ENCODE measurements at regions of chr4 and their contacts with region 1.

Region 1: DNA sequence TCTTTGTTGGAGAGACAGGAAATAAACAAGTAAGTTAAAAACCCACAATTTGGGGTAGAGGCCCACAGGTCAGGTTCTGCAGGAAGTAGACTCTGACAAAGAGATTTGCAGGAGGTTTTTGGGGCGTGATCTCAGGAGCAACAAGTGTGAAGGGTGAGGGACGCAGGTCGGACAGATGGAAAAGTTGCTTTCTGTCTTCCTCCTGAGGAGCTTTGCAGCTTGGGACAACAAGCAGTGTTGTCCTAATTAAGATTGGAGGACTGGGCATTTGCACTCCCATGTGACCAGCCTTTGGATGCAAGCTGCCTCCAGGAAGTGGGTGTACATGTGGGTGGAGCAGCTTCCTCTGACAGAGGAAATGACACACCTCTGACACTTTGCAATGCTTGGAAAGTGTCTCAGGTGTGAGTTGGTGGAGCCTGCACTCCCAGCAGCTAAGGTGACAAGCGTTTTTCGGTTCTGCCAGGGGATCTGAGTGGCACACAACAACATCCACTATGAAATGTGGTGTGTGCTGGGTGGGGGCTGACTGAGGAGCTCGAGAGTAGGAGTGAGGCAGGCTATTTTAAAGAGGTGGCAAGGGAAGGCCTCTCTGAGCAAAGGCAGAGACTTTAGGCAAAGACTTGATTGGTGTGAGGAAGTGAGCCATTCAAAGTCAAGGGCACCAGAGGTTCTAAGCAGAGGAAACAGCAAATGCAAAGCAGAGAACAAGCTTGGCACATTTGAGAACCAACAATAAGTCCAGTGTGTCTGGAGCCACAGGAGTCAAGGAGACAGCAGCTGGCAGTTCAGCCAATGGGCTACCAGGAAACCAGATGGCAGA is 339.8 kb upstream of the GATB start:
- DNase-seq: peak; percentile 61 to 93 (median 82)
- ATAC-seq: peak; percentile 82
- H3K4me3 ChIP-seq: peak overlapping the region; percentile 9 to 61
- H3K4me3 Mint-ChIP-seq: peak overlapping the region; percentile 85
- H3K27ac ChIP-seq: peak overlapping the region; percentile 80 to 90
- H3K27ac Mint-ChIP-seq: peak overlapping the region; percentile 99
- H3K4me1 ChIP-seq: peaks cover 96% of the 10 kb centered on the region
- H3K4me1 Mint-ChIP-seq: peaks cover 91% of the 10 kb centered on the region
- H3K27me3 ChIP-seq: no peaks in the 10 kb centered on the region
- H3K27me3 Mint-ChIP-seq: no peaks in the 10 kb centered on the region
- CTCF ChIP-seq: no peak

Region 2: DNA sequence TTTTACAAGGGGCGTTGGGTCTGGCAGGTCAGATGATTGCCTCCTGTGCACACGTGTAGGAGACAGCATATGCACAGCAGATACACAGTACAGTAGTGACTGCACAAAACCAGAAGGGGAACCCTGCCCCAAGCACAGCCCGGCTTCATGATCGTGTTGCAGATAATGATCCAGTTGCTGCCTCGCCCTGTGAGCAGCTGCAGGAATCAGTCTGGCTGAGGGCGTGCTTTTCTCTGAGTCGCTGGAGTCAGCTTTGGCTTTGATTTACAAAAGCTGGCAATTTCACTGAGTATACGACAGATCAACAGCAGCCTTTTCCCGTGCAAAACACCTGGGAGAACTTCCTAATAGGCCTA is 36.7 kb before region 1 on chr4:
- CTCF ChIA-PET with region 1: interaction called, 6 read pairs
- POLR2A ChIA-PET with region 1: interaction called, 8 read pairs
- intact Hi-C with region 1: loop called in 1 of 2 experiments (anchors 5 kb)
- DNase-seq: peak; percentile 17 to 75 (median 46)
- ATAC-seq: peak; percentile 98
- H3K4me3 ChIP-seq: no peak overlapping the region
- H3K4me3 Mint-ChIP-seq: no peak overlapping the region
- H3K27ac ChIP-seq: no peak overlapping the region
- H3K27ac Mint-ChIP-seq: no peak overlapping the region
- H3K4me1 ChIP-seq: peaks cover 4% of the 10 kb centered on the region
- H3K4me1 Mint-ChIP-seq: peaks cover 38% of the 10 kb centered on the region
- H3K27me3 ChIP-seq: no peaks in the 10 kb centered on the region
- H3K27me3 Mint-ChIP-seq: no peaks in the 10 kb centered on the region
- CTCF ChIP-seq: peak; percentile 23

Region 3: DNA sequence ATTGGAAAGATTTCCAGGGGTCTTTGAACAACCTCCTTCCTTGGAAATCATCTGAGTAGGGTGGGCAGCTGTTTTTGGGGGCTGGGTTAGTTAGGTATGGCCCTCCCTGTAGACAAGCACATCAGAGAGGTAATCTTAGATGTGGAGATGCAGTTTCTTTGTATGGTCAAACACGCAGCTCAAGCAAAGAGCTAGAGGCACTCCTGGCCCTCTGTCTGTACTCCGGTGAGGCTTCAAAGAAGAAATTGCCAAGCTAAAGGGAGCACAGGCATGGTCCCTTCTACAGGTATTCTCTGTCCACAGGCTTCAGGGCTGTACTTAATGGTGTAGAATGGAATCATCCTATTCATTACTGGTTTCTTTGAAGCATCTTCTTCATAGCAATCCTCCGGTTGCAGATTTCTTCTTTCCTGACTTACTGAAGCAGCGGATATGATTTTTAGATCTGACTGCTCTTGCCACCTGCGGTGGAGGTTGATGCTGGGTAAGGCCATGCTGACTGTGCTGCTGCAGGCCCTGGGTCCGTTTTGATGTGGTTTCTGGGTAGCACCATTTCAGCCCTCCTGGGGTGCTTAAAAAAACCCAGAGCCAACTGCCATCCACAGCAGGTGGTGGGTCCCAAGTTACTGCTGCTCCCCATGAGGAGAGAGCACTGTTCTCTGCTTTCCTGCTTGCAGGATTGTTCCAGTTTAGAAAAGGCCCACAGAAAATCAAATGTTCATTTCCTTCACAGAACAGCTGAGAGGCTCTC is 20.9 kb before region 1 on chr4:
- CTCF ChIA-PET with region 1: interaction called, 5 read pairs
- POLR2A ChIA-PET with region 1: interaction called, 14 read pairs
- intact Hi-C with region 1: loop called in 1 of 2 experiments (anchors 2 kb)
- DNase-seq: peak in 8 of 9 experiments; percentile 22 to 80 (median 53)
- ATAC-seq: peak; percentile 82
- H3K4me3 ChIP-seq: no peak overlapping the region
- H3K4me3 Mint-ChIP-seq: peak overlapping the region; percentile 26
- H3K27ac ChIP-seq: peak overlapping the region in 1 of 2 experiments; percentile 43
- H3K27ac Mint-ChIP-seq: peak overlapping the region; percentile 92
- H3K4me1 ChIP-seq: peaks cover 41% of the 10 kb centered on the region
- H3K4me1 Mint-ChIP-seq: peaks cover 79% of the 10 kb centered on the region
- H3K27me3 ChIP-seq: no peaks in the 10 kb centered on the region
- H3K27me3 Mint-ChIP-seq: no peaks in the 10 kb centered on the region
- CTCF ChIP-seq: no peak

Region 4: GRCh38 chr4:152112887-152113286 is 12.3 kb after region 1 on chr4:
- CTCF ChIA-PET with region 1: interaction called, 13 read pairs
- POLR2A ChIA-PET with region 1: interaction called, 21 read pairs
- intact Hi-C with region 1: loop called in 1 of 2 experiments (anchors 1 kb)
- DNase-seq: peak in 2 of 9 experiments; percentile 26 to 49
- ATAC-seq: no peak
- H3K4me3 ChIP-seq: no peak overlapping the region
- H3K4me3 Mint-ChIP-seq: no peak overlapping the region
- H3K27ac ChIP-seq: peak overlapping the region in 1 of 2 experiments; percentile 34
- H3K27ac Mint-ChIP-seq: peak overlapping the region; percentile 97
- H3K4me1 ChIP-seq: peaks cover 81% of the 10 kb centered on the region
- H3K4me1 Mint-ChIP-seq: peaks cover 92% of the 10 kb centered on the region
- H3K27me3 ChIP-seq: no peaks in the 10 kb centered on the region
- H3K27me3 Mint-ChIP-seq: no peaks in the 10 kb centered on the region
- CTCF ChIP-seq: no peak

Region 5: DNA sequence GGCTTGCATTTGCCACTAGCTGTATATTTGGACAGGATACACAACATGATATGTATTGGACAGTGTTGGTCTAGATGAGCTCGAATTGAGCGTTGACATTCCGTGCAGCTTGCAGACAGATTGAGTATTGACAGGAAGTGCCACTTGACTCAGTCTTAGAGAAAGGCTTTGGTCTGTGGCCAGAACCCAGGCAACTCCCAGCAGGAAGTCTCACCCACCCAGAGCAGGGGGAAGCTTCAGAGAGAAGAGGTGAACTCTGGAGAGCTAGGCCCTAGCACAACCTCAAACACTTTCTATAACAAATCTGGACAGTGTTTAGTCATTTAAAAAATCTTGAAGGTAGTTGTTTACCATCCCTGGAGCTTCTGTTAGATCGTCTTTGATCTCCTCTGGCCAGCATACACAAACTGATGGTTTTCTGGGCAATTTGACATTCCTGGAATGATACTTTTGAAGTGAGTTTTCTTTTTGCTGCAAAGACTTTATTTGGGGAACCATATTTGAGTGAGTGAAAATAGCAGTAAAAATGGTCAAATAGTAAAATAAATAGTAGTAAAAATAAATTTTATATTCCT is 154.9 kb after region 1 on chr4:
- CTCF ChIA-PET with region 1: interaction called, 3 read pairs
- POLR2A ChIA-PET with region 1: interaction called, 18 read pairs
- intact Hi-C with region 1: loop called (anchors 10 kb)
- DNase-seq: peak; percentile 15 to 87 (median 69)
- ATAC-seq: peak; percentile 98
- H3K4me3 ChIP-seq: no peak overlapping the region
- H3K4me3 Mint-ChIP-seq: no peak overlapping the region
- H3K27ac ChIP-seq: peak overlapping the region in 1 of 2 experiments; percentile 40
- H3K27ac Mint-ChIP-seq: no peak overlapping the region
- H3K4me1 ChIP-seq: peaks cover 49% of the 10 kb centered on the region
- H3K4me1 Mint-ChIP-seq: peaks cover 23% of the 10 kb centered on the region
- H3K27me3 ChIP-seq: no peaks in the 10 kb centered on the region
- H3K27me3 Mint-ChIP-seq: no peaks in the 10 kb centered on the region
- CTCF ChIP-seq: no peak

Region 6: DNA sequence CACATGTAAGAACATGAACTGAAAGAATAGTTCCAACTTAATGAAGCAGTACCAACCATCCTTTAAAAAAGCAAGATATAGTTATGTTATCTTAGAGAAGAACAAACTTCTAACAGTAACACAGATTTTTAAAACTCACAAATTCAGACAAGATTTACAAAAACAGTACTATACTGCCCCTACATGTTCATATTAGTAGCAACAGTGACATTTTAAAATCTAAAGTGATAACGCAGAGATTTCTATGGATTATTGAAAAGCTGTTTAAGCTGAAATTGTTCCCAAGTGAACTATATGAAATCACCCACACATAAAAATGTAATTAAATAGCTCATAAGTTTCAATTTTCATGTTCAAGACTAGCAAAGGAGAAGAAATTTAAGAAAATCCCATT is 269.3 kb after region 1 on chr4:
- CTCF ChIA-PET with region 1: no interaction called
- POLR2A ChIA-PET with region 1: no interaction called
- intact Hi-C with region 1: loop called in 1 of 2 experiments (anchors 5 kb)
- DNase-seq: peak in 1 of 9 experiments; percentile 26
- ATAC-seq: no peak
- H3K4me3 ChIP-seq: no peak overlapping the region
- H3K4me3 Mint-ChIP-seq: no peak overlapping the region
- H3K27ac ChIP-seq: no peak overlapping the region
- H3K27ac Mint-ChIP-seq: no peak overlapping the region
- H3K4me1 ChIP-seq: no peaks in the 10 kb centered on the region
- H3K4me1 Mint-ChIP-seq: peaks cover 13% of the 10 kb centered on the region
- H3K27me3 ChIP-seq: no peaks in the 10 kb centered on the region
- H3K27me3 Mint-ChIP-seq: no peaks in the 10 kb centered on the region
- CTCF ChIP-seq: peak; percentile 53

Measured in CD8-positive, alpha-beta T cell (primary cell).